HEK293T (cell line): ENCODE measurements at regions of chr16 and their contacts with region 1.

Region 1: GRCh38 chr16:66608241-66609138 is 4.0 kb downstream of the CMTM3 start:
- DNase-seq: peak; percentile 90

Region 2: GRCh38 chr16:66618588-66619375 is 10.3 kb after region 1 on chr16:
- CTCF ChIA-PET with region 1: interaction called, 38 read pairs
- POLR2A ChIA-PET with region 1: interaction called, 5 read pairs
- DNase-seq: no peak

Region 3: GRCh38 chr16:66660422-66661209 is 52.1 kb after region 1 on chr16:
- CTCF ChIA-PET with region 1: interaction called, 21 read pairs
- POLR2A ChIA-PET with region 1: no interaction called
- DNase-seq: peak; percentile 67

Region 4: DNA sequence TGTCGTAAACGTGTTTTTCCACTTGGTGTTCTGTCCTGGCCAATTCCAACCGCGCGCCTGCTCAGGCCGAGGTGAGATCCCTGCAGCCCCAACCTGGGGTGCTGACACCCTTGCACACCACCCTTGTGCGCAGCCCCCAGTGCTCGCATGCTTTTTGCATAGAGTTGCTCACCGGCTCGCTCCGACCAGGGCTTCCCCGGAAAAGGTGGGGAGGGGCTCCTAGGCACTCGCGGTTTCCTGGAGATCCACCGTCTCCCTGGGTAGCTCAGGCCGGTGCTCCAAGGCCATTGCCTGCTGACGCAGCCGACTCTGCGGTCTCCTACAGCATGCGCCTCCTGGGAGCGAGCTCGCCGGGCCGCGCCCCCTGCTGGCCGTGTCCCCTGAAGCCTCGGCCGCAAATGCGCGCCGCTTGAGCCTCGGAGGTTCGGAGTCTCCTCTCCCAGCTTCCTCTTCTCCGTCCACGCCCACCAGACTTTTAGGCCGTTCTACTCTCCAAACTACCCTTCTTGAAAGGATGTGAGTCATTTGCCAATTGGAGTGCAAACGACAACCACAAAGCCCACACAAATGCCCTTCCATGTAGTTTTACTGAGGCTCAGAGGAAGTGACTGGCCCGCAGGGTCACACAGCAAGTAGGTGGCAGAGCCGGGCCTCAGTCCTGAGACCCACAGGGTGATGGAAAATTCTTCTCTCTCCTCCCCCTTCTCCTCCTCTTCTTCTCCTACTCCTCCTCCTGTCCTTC is 264.6 kb after region 1 on chr16:
- CTCF ChIA-PET with region 1: interaction called, 15 read pairs
- POLR2A ChIA-PET with region 1: no interaction called
- DNase-seq: peak; percentile 86